ENCODE measurements at regions of chr6 and their contacts with region 1.

Region 1: DNA sequence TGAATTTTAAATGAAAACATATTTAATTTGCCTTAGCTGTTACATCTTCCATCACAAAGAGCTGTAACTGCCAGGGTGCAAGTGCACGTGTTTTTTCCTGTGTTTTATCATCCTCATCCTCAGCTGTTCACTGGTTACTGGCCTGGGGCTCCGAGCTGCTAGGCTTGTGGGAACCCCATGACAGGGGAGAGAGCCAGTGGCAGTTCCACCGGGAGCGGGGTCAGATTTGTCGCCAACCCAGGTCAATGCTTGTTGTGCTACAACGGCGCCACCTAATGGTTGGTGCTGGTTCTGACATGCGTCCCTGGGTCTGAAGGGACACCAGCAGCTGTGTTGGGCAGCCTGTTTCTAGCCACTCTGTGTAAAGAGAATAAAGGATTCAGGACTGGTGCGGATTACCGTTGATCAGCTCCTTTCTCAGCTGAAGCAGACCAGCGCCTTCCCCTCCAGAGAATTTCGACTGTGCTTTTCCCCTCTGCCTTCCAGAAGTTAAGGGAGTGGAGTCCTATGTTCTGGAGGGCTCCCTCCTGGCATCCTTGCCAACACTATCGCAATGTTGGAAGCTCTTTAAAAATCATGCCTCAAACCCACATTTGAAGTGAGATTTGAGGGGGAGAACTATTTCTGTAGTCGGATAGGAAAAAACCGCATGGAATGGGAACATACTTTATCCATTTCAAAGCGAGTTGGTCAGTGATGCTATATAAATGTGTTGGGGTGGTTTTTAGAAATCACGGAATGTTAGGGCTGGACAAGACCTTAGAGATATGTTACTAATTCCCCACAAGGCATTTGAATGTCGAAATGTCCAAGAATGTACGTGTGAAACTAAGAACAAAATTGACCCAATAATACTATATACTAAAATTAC is 32.1 kb downstream of the SUMO4 start:
- DNase-seq: peak; percentile 95
- ATAC-seq: peak; percentile 98
- H3K4me3 Mint-ChIP-seq: peak overlapping the region; percentile 28
- H3K27ac Mint-ChIP-seq: peak overlapping the region; percentile 76
- H3K4me1 Mint-ChIP-seq: peaks cover 14% of the 10 kb centered on the region
- H3K27me3 Mint-ChIP-seq: no peaks in the 10 kb centered on the region

Region 2: GRCh38 chr6:149043476-149044130 is 388.5 kb before region 1 on chr6:
- CTCF ChIA-PET with region 1: interaction called, 46 read pairs
- DNase-seq: peak; percentile 62
- ATAC-seq: no peak
- H3K4me3 Mint-ChIP-seq: no peak overlapping the region
- H3K27ac Mint-ChIP-seq: no peak overlapping the region
- H3K4me1 Mint-ChIP-seq: peaks cover 60% of the 10 kb centered on the region
- H3K27me3 Mint-ChIP-seq: no peaks in the 10 kb centered on the region

Region 3: DNA sequence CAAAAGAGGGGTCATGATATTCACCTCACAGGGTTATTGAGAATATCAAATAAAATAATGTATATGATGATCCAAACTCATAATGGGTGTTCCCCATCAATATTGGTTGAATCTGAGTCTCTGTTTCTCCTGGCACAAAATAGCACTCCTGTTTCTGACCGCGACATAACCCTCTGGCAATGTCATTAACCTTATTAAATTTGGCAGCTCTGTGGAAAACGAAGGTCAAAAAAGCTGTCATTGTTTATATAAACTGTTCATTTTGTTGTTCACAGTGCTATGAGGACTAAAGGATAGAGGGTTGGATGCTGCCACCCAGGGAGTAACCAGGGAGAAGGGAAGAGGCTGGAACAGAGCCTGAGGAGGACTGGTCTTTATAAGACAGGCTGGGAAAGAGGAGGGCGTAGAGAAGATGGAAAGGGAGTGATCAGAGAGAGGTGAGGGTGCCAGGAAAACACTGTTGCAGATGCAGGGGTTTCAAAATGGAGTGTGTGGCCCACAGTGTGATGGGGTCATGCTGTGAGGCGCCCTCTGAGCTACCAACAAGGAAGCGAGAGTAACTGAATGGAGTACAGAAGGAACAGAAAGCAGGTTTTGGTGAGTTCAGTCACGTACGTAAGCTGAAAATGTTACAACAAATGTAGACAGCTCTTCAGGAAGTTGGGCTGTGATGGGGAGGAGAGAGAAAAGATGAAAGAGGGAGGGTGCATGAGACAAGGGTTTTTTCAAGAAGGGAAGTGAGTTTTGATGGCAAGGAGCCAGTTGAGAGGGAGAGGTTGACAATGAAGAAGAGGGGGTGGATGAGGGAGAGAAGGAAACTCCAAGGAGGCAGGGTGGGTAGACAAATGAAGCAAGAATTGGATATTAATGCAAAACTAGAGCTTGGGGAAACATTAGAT is 366.2 kb before region 1 on chr6:
- CTCF ChIA-PET with region 1: interaction called, 15 read pairs
- DNase-seq: peak; percentile 70
- ATAC-seq: peak; percentile 88
- H3K4me3 Mint-ChIP-seq: peak overlapping the region; percentile 35
- H3K27ac Mint-ChIP-seq: peak overlapping the region; percentile 85
- H3K4me1 Mint-ChIP-seq: peaks cover 48% of the 10 kb centered on the region
- H3K27me3 Mint-ChIP-seq: no peaks in the 10 kb centered on the region

Region 4: DNA sequence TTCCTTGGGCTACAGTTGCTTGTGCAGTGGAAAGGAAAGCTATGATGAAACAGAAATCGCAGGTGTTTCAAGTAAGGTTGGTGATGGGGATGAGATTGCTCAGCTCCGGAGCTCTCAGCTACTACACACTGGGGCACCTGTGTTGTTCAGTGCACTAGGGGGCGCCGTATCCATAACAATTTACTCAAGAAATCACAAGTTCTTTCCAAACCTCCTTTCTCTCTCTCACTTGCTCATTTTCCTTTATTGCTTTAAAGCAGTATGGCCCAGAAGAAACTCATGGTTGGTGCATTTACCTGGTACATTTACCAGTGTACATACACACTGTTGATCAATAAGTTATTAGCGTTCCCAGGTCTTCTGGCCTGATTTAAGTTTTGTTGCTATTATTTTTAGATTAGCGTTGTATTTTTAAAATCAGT is 349.8 kb before region 1 on chr6:
- CTCF ChIA-PET with region 1: interaction called, 74 read pairs
- DNase-seq: peak; percentile 94
- ATAC-seq: peak; percentile 79
- H3K4me3 Mint-ChIP-seq: peak overlapping the region; percentile 18
- H3K27ac Mint-ChIP-seq: peak overlapping the region; percentile 96
- H3K4me1 Mint-ChIP-seq: peaks cover 87% of the 10 kb centered on the region
- H3K27me3 Mint-ChIP-seq: no peaks in the 10 kb centered on the region

Region 5: DNA sequence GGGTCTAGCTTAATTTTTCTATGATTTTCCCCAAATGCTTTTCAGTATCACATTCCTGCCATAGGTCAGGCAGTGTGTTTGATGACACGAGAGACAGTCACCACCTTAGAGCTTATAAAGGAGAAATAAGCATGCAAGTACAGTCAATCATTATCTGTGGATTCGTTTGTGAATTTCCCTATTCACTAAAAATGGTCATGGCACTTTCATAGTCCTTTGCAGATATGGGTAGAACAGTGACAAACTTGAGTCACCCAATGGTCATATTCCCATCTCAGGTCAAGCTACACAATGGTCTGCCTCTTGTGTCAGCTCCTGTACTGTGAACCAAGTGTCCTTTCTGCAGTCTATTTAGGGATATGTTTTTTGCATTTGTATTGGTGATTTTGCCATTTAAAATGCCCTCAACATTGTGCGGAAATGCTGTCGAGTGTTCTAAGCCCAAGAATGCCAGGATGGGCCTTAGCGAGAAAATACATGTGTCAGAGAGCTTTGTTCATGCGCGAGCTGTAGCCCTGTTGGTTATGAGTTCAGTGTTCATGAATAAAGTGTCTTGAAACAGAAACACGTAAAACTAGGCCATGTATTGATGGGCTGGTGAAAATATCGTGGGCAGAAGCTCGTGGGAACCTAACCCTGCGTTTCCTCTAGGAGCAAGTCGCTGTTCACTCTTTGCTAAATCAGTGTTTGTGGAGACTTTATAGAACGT is 12.3 kb before region 1 on chr6:
- CTCF ChIA-PET with region 1: interaction called, 29 read pairs
- DNase-seq: no peak
- ATAC-seq: no peak
- H3K4me3 Mint-ChIP-seq: no peak overlapping the region
- H3K27ac Mint-ChIP-seq: no peak overlapping the region
- H3K4me1 Mint-ChIP-seq: peaks cover 27% of the 10 kb centered on the region
- H3K27me3 Mint-ChIP-seq: no peaks in the 10 kb centered on the region

Region 6: DNA sequence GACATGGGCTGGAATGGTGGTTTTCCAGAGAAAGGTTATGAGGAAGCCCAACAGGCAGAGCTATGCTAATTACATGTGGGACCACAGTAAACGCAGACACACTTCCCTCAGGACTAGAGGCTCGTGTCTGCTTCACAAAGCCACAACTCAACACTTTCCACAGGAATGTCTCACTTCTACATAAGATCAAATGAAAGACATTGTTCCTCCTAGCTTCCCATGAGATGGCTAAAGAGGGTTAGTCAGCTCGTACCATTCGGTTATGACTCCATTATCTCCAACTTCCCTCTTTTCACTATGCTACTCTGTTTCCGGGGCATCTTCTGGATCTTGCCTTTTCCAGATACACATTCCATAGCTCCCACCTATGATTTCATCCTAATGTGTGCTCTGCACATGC is 81.8 kb after region 1 on chr6:
- CTCF ChIA-PET with region 1: interaction called, 36 read pairs
- DNase-seq: no peak
- ATAC-seq: no peak
- H3K4me3 Mint-ChIP-seq: no peak overlapping the region
- H3K27ac Mint-ChIP-seq: no peak overlapping the region
- H3K4me1 Mint-ChIP-seq: peaks cover 49% of the 10 kb centered on the region
- H3K27me3 Mint-ChIP-seq: no peaks in the 10 kb centered on the region